Activated CD4-positive, alpha-beta T cell treated with anti-CD3 and anti-CD28 coated beads for 36 hours (primary cell): ENCODE measurements at regions of chr2 and their contacts with region 1.

Region 1: DNA sequence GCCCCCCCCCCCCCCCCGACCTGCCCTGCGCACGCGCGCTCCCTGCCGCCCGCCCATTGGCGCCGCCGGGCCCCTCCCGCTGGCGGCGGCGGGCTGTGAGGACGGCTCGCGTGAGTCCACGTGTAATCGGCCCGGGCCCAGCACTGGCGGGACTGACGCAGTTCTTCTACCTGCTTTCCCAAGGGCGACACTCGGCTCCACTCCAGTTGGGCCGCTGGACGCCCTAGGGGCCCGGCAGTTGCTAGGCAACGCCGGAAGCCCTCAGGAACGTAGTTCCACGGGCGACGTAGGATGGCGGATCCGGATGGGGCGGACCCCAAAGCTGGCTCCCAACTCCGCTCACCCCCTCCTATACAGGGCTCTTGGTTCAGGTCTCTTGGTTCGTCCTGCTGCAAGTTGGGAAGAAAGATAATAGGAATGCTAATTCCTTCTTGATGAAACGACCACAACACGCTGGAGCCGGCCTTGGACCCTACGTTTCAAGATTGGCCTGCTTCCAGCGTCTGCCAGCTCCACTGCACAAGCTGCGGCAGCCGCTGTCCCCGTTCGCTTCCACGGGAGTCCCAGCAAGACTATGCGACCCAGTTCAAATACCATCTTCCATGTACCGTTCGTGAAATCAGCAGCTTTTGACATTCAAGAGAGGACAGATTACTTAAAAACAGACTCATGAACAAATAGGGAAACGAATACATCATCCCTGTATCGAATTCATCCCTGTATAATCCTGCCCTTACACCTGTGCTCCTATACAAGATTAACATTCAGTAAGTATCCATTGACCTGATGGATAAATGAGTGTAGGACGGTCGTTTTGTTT is 415 bp upstream of the MCFD2 start:
- DNase-seq: peak; percentile 87
- ATAC-seq: peak; percentile 89
- H3K4me3 Mint-ChIP-seq: peak overlapping the region; percentile 93
- H3K27ac Mint-ChIP-seq: peak overlapping the region; percentile 62
- H3K4me1 Mint-ChIP-seq: peaks cover 49% of the 10 kb centered on the region
- H3K27me3 Mint-ChIP-seq: no peaks in the 10 kb centered on the region

Region 2: DNA sequence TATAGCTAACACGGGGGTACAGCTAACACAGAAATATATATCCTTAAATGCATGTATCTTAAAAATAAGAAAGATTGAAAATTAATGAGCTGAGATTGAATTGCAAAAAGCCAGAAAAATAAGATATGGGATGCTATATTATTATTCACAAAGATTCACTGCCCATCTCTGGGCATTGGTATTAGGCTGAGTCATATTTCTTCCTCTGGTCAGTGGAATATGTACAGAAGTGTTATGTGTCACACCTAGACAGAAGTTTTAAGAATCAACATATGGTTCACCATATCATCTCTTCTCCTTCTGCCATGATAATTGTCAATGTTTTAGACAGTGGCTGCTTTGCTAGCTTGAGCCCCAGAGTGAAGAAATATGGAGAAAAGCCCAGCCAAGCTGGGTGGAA is 13.6 kb after region 1 on chr2:
- CTCF ChIA-PET with region 1: interaction called, 47 read pairs
- POLR2A ChIA-PET with region 1: no interaction called
- intact Hi-C with region 1: no loop called
- DNase-seq: no peak
- ATAC-seq: no peak
- H3K4me3 Mint-ChIP-seq: no peak overlapping the region
- H3K27ac Mint-ChIP-seq: no peak overlapping the region
- H3K4me1 Mint-ChIP-seq: peaks cover 3% of the 10 kb centered on the region
- H3K27me3 Mint-ChIP-seq: no peaks in the 10 kb centered on the region

Region 3: DNA sequence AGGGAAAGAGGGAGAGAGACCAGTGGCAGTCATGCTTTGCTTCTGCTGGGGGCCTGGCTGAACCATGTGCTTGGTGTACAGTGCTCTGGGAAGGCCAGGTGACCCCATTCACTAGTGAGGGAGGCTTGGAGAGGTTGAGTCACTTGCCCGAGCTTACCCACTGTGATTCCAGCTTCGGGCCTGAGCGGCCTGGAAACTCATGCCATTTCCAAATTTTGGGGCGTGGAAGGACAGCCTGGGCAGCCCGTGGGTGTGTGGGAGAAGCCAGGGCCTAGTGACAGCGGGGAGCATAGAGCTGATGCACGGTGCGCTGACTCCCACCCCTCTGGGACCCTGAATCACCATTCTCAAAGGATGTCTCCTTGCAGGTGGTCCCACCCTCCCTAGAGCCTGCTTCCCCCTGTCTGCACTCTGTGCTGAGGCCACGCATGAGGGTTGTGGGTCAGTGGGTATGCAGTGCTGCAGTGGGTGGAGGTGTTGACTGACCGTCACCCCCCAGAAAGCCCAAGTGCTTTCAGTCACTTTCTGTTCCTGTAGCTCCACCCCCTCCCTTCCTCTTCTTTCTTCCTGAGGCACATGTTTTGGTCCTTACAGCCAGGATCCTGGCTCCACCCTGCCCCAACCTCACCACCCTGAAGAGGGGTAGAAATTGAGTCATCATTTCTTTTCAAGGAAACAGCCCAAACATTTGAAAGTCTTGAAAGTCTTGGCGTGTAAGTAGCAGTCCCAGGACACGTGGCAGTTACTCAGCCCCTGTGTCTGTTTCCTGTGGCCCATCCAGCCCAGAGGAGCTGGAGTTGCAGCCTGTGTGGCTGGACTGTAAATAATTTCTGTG is 68.8 kb after region 1 on chr2:
- CTCF ChIA-PET with region 1: interaction called, 17 read pairs
- POLR2A ChIA-PET with region 1: no interaction called
- intact Hi-C with region 1: loop called (anchors 1 kb)
- DNase-seq: peak; percentile 79
- ATAC-seq: peak; percentile 87
- H3K4me3 Mint-ChIP-seq: peak overlapping the region; percentile 59
- H3K27ac Mint-ChIP-seq: peak overlapping the region; percentile 96
- H3K4me1 Mint-ChIP-seq: peaks cover 68% of the 10 kb centered on the region
- H3K27me3 Mint-ChIP-seq: no peaks in the 10 kb centered on the region

Region 4: GRCh38 chr2:47323009-47323821 is 407.2 kb after region 1 on chr2:
- CTCF ChIA-PET with region 1: interaction called, 6 read pairs
- POLR2A ChIA-PET with region 1: interaction called, 4 read pairs
- intact Hi-C with region 1: loop called (anchors 1 to 5 kb)
- DNase-seq: peak; percentile 82
- ATAC-seq: peak; percentile 98
- H3K4me3 Mint-ChIP-seq: no peak overlapping the region
- H3K27ac Mint-ChIP-seq: no peak overlapping the region
- H3K4me1 Mint-ChIP-seq: no peaks in the 10 kb centered on the region
- H3K27me3 Mint-ChIP-seq: peaks cover 2% of the 10 kb centered on the region

Region 5: GRCh38 chr2:47782671-47783485 is 866.9 kb after region 1 on chr2 and contains the start of gene MSH6:
- CTCF ChIA-PET with region 1: no interaction called
- POLR2A ChIA-PET with region 1: no interaction called
- intact Hi-C with region 1: loop called in 1 of 2 experiments (anchors 10 kb)
- DNase-seq: peak; percentile 93
- ATAC-seq: peak; percentile 92
- H3K4me3 Mint-ChIP-seq: peak within 1 kb of the TSS; percentile 84
- H3K27ac Mint-ChIP-seq: peak within 1 kb of the TSS; percentile 82
- H3K4me1 Mint-ChIP-seq: peaks cover 31% of the 10 kb centered on the region
- H3K27me3 Mint-ChIP-seq: no peaks in the 10 kb centered on the region
- total RNA-seq, gene MSH6: 119 to 166 TPM